MCF 10A (cell line): ENCODE measurements at regions of chr5 and their contacts with region 1.

Region 1: DNA sequence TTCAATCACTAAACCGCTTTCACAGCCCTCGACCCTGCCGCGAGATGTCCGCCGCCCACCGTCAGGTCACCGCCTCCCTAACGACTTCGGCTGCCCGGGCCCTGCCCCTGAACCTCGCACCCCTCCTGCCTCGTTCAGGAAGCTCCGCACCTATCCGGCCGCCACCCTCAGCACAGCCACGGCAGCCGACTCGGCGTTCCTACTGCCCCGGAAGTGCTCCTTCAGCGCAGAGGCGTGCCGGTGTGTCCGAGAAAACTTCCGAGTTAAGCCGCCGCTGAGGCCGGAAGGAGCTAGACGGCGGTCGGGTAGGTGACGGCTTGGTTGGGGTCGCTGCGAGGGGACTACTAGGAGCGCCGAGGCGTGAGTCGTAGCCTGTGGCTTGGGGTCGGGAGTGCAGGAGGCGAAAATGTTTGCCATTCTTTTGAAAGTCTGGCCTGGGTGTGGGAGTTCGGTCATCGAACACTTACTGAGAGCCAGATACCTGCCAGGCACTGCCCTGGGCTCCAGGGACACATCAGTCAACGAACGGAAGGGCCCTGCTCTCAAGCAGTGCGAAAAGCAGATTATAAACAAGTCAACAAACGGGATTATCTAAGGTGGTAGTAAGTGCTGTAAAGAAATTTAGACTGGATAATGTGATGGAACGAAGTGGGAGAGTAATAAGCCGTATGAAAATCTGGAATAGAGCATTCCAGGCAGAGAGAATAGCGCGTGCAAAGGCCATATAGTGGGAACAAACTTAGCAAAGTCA is at the starts of genes FAM114A2 and MFAP3:
- DNase-seq: peak; percentile 93
- H3K4me3 Mint-ChIP-seq: peak within 1 kb of the TSS; percentile 96
- H3K27ac Mint-ChIP-seq: peak within 1 kb of the TSS; percentile 98
- H3K4me1 Mint-ChIP-seq: peaks cover 39% of the 10 kb centered on the region
- H3K27me3 Mint-ChIP-seq: no peaks in the 10 kb centered on the region
- CTCF ChIP-seq: no peak
- total RNA-seq, gene FAM114A2: 48.8 and 76.3 TPM in 2 replicates
- total RNA-seq, gene MFAP3: 48.8 and 56.0 TPM in 2 replicates

Region 2: GRCh38 chr5:153974131-153974812 is 64.6 kb before region 1 on chr5:
- CTCF ChIA-PET with region 1: interaction called, 10 read pairs
- POLR2A ChIA-PET with region 1: interaction called, 4 read pairs
- intact Hi-C with region 1: no loop called
- DNase-seq: peak; percentile 68
- H3K4me3 Mint-ChIP-seq: no peak overlapping the region
- H3K27ac Mint-ChIP-seq: no peak overlapping the region
- H3K4me1 Mint-ChIP-seq: no peaks in the 10 kb centered on the region
- H3K27me3 Mint-ChIP-seq: peaks cover 21% of the 10 kb centered on the region
- CTCF ChIP-seq: peak; percentile 94

Region 3: DNA sequence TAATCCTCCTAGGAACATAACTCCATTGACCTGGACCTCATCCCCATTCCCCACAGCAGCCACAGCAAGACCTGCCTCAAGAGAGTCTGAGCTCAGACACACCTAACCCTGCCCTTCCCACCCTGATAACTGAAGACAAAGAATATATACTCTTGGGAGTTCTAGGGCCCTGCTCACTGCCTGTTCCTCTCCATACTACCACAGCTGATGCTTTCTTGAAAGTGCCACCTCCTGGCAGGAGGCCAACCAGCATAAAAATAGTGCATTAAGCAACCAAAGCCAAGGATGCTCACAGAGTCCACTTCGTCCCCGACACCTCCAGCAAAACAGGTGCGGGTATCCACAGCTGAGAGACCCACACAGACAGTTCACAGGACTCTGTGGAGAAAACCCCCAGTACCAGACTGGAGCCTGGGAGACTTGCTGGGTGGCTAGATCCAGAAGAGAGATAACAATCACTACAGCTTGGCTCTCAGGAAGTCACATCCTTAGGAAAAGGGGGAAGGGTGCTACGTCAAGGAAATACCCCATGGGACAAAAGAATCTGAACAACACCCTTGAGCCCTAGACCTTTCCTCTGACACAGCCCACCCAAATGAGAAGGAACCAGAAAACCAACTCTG is 23.7 kb before region 1 on chr5:
- CTCF ChIA-PET with region 1: no interaction called
- POLR2A ChIA-PET with region 1: interaction called, 11 read pairs
- intact Hi-C with region 1: no loop called
- DNase-seq: no peak
- H3K4me3 Mint-ChIP-seq: no peak overlapping the region
- H3K27ac Mint-ChIP-seq: no peak overlapping the region
- H3K4me1 Mint-ChIP-seq: peaks cover 9% of the 10 kb centered on the region
- H3K27me3 Mint-ChIP-seq: no peaks in the 10 kb centered on the region
- CTCF ChIP-seq: no peak

Region 4: DNA sequence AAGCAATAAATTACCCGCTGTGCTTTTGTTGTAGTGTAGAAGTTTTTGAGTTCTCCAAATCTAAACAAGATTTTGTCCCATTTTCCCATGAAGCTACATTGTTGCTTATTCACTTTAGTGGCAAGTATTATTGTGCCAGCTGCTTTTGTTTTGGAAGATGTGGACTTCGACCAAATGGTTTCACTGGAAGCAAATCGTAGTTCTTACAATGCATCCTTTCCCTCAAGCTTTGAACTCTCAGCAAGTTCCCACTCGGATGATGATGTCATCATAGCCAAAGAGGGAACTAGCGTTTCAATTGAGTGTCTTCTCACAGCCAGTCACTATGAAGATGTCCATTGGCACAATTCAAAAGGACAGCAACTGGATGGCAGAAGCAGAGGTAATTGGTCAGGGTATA is 10.8 kb after region 1 on chr5:
- CTCF ChIA-PET with region 1: interaction called, 4 read pairs
- POLR2A ChIA-PET with region 1: interaction called, 34 read pairs
- intact Hi-C with region 1: no loop called
- DNase-seq: no peak
- H3K4me3 Mint-ChIP-seq: no peak overlapping the region
- H3K27ac Mint-ChIP-seq: no peak overlapping the region
- H3K4me1 Mint-ChIP-seq: peaks cover 11% of the 10 kb centered on the region
- H3K27me3 Mint-ChIP-seq: no peaks in the 10 kb centered on the region
- CTCF ChIP-seq: no peak

Region 5: DNA sequence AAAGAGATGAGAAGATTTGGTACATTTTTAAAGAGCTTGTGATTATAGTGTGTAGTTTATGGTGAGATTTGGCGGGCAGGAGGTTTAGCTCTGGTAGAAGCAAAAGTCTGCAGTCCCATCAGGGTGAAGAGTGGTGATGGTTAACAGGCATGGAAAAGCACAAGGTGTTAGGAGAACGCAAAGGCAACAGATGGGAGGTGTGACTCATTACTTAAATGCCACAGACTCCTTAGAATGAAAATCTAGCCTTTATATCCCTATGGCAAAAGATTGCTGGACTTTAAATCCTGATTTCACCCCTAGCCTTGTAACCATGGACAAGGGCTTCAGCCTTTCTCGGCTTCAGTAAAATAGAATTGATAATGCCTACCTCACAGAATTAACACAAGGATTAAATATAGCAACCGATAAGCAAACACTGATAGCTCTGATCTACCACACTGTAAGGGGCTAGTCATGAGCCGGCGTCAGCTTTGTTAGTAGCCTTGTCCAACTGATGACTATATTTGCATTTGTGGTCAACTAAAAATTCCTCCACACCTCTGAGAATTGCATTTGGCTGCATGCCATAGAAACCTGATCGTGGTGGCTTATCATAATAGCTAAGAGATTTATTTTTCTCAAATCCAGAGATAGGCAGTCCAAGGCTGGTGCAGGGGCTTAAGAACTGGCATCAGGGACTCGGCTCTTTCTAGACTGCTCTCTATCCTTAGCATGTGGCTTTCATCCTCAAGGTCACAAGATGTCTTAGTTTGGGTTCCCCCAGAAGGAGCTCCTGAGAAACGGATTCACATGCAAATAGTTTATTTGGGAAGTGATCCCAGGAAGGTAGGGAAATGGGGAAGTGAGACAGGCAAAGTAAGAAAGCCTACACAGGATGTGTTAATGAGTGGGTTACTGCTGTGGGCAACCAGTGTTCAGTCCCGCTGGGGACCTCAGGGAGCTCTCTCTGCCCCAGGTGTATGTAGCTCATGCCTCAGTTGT is 19.5 kb after region 1 on chr5:
- CTCF ChIA-PET with region 1: interaction called, 4 read pairs
- POLR2A ChIA-PET with region 1: interaction called, 13 read pairs
- intact Hi-C with region 1: no loop called
- DNase-seq: peak; percentile 53
- H3K4me3 Mint-ChIP-seq: no peak overlapping the region
- H3K27ac Mint-ChIP-seq: no peak overlapping the region
- H3K4me1 Mint-ChIP-seq: peaks cover 7% of the 10 kb centered on the region
- H3K27me3 Mint-ChIP-seq: no peaks in the 10 kb centered on the region
- CTCF ChIP-seq: no peak

Region 6: GRCh38 chr5:154445422-154446182 is 406.7 kb after region 1 on chr5 and contains the start of gene SAP30L:
- CTCF ChIA-PET with region 1: no interaction called
- POLR2A ChIA-PET with region 1: interaction called, 12 read pairs
- intact Hi-C with region 1: no loop called
- DNase-seq: peak; percentile 98
- H3K4me3 Mint-ChIP-seq: peak within 1 kb of the TSS; percentile 99
- H3K27ac Mint-ChIP-seq: peak within 1 kb of the TSS; percentile 90
- H3K4me1 Mint-ChIP-seq: peaks cover 47% of the 10 kb centered on the region
- H3K27me3 Mint-ChIP-seq: no peaks in the 10 kb centered on the region
- CTCF ChIP-seq: no peak
- total RNA-seq, gene SAP30L: 45.9 and 50.5 TPM in 2 replicates